ENCODE measurements at regions of chr5 and their contacts with region 1.

Region 1: DNA sequence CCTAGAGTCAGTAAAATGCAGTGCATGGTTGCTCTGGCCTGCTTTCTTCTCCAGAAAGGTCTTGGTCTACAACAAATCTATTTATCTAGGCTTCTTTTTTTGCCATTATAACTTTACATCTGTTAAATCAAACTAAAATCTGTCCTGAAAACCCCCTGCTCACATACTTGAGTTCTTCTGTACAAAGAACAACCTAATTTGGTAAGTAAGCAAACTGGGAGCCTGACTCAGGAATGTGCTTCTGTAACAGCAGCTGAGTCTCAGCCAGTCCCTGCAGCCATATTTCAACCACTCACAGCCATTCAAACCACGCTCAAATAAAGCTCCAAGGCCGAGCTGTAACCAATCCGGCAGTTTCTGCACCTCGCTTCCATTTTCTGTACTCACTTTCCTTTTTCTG is 95.8 kb downstream of the PLPP1 start:
- DNase-seq: no peak
- H3K4me3 ChIP-seq: no peak overlapping the region
- H3K27ac ChIP-seq: peak overlapping the region; percentile 71 to 75
- H3K4me1 ChIP-seq: peaks cover 14% of the 10 kb centered on the region
- H3K27me3 ChIP-seq: no peaks in the 10 kb centered on the region
- CTCF ChIP-seq: no peak
- POLR2A ChIP-seq: no peak

Region 2: DNA sequence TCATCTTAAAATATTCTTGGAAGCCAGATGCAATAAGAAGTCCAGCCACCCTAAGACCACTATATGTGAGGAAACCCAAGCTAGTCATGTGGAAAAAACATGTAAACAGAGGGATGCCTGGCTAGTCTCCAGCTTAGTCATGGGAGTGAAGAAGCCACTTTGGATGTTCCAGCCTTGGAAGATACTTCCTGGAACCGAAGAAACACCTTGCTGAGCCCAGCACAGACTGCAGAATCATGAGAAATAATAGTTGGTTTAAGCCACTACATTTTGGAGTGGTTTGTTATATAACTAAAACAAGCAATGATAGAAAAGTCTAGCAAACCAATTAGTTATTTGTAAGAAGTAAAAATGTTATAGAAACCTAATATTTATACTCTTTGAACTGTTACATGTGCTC is 144.1 kb before region 1 on chr5:
- intact Hi-C with region 1: no loop called
- DNase-seq: no peak
- H3K4me3 ChIP-seq: no peak overlapping the region
- H3K27ac ChIP-seq: no peak overlapping the region
- H3K4me1 ChIP-seq: no peaks in the 10 kb centered on the region
- H3K27me3 ChIP-seq: no peaks in the 10 kb centered on the region
- CTCF ChIP-seq: no peak
- POLR2A ChIP-seq: no peak

Region 3: GRCh38 chr5:55347786-55348185 is 91.2 kb before region 1 on chr5:
- intact Hi-C with region 1: no loop called
- DNase-seq: no peak
- H3K4me3 ChIP-seq: no peak overlapping the region
- H3K27ac ChIP-seq: no peak overlapping the region
- H3K4me1 ChIP-seq: no peaks in the 10 kb centered on the region
- H3K27me3 ChIP-seq: no peaks in the 10 kb centered on the region
- CTCF ChIP-seq: no peak
- POLR2A ChIP-seq: no peak

Region 4: GRCh38 chr5:55601204-55601618 is 162.2 kb after region 1 on chr5:
- intact Hi-C with region 1: loop called (anchors 5 kb)
- DNase-seq: peak; percentile 95
- H3K4me3 ChIP-seq: no peak overlapping the region
- H3K27ac ChIP-seq: peak overlapping the region; percentile 90 to 96
- H3K4me1 ChIP-seq: peaks cover 20% of the 10 kb centered on the region
- H3K27me3 ChIP-seq: no peaks in the 10 kb centered on the region
- CTCF ChIP-seq: peak in 1 of 4 experiments; percentile 3
- POLR2A ChIP-seq: no peak

Region 5: GRCh38 chr5:56301041-56301440 is 862.0 kb after region 1 on chr5:
- intact Hi-C with region 1: no loop called
- DNase-seq: peak; percentile 32
- H3K4me3 ChIP-seq: no peak overlapping the region
- H3K27ac ChIP-seq: no peak overlapping the region
- H3K4me1 ChIP-seq: no peaks in the 10 kb centered on the region
- H3K27me3 ChIP-seq: no peaks in the 10 kb centered on the region
- CTCF ChIP-seq: no peak
- POLR2A ChIP-seq: no peak